PC-9 (cell line): ENCODE measurements at regions of chr2 and their contacts with region 1.

Region 1: DNA sequence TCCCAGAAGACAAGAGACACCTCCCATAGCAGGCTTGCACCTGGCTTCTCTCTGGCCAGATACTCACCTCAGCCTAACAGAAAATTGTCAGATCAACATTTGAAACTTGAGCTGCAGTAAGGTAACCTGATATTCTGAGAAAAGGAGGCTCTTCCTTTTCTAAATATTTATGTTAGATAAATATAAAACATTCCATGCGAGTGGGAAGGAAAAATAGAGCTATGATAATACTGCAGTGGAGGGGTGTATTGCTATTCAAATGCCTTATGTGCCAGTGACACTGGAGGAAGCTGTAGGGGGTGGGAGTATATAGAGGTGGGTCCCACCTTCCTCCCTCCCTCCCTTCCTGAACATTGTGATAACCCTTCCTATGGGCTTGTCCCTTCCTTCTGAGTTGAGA is 515.5 kb upstream of the CHAC2 start:
- DNase-seq: peak; percentile 28 to 58
- H3K4me3 ChIP-seq: no peak overlapping the region
- H3K27ac ChIP-seq: peak overlapping the region; percentile 39; the same call in 1 of the 2 replicates
- H3K4me1 ChIP-seq: peaks cover 11% of the 10 kb centered on the region
- H3K27me3 ChIP-seq: no peaks in the 10 kb centered on the region
- CTCF ChIP-seq: no peak

Region 2: DNA sequence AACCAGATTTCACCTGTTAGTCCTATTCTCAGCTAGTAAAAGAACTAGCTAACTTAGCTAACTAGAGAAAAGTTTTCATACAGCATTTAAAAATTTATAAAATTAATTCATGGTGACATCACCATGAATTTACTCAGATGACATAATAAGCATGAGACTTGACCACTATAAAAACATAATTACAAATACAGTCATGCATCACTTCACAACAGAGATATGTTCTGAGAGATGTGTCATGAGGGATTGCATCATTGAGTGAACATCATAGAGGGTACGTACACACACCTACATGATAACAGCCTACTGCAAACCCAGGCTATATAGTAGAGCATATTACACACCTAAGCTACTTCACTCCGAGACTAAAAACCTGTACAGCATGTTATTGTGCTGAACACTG is 34.2 kb after region 1 on chr2:
- CTCF ChIA-PET with region 1: interaction called, 3 read pairs
- POLR2A ChIA-PET with region 1: no interaction called
- intact Hi-C with region 1: loop called (anchors 2 kb)
- DNase-seq: no peak
- H3K4me3 ChIP-seq: no peak overlapping the region
- H3K27ac ChIP-seq: no peak overlapping the region
- H3K4me1 ChIP-seq: peaks cover 17% of the 10 kb centered on the region; the same call in 1 of the 2 replicates
- H3K27me3 ChIP-seq: no peaks in the 10 kb centered on the region
- CTCF ChIP-seq: no peak

Region 3: DNA sequence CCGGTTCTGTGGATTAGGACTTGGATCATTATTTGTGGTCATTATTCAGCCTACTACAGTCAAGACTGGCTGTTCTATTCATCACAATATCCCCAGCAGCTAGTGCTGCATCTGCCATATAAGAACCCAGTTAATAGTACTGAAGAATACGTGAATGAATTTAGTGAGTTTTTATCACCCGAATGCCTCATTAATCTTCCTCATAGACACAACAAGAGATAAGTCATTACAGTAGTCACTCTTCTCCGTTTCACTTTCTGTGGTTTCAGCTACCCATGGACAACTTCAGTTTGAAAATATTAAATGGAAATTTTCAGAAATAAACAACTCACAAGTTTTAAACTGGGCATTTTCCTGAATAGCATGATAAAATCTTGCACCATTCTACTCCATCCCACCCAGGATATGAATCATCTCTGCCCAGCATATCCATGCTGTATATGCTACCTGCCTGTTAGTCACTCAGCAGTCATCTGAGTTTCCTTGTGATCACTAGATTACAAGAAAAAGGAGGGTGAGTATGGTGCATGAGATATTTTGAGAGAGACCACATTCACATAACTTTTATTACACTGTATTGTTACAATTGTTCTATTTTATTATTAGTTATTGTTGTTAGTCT is 151.8 kb after region 1 on chr2:
- CTCF ChIA-PET with region 1: no interaction called
- POLR2A ChIA-PET with region 1: no interaction called
- intact Hi-C with region 1: loop called (anchors 1 kb)
- DNase-seq: peak; percentile 25 to 83
- H3K4me3 ChIP-seq: no peak overlapping the region
- H3K27ac ChIP-seq: peak overlapping the region; percentile 92
- H3K4me1 ChIP-seq: peaks cover 29% of the 10 kb centered on the region
- H3K27me3 ChIP-seq: no peaks in the 10 kb centered on the region
- CTCF ChIP-seq: no peak